IMR-90 (cell line): ENCODE measurements at regions of chr2 and their contacts with region 1.

Region 1: GRCh38 chr2:10312437-10312957 is 9.8 kb downstream of the HPCAL1 start:
- DNase-seq: no peak
- ATAC-seq: no peak
- H3K4me3 ChIP-seq: no peak overlapping the region
- H3K27ac ChIP-seq: no peak overlapping the region
- H3K4me1 ChIP-seq: no peaks in the 10 kb centered on the region; the same call in 1 of the 2 replicates
- H3K27me3 ChIP-seq: no peaks in the 10 kb centered on the region
- CTCF ChIP-seq: no peak
- POLR2A ChIP-seq: no peak
- RAD21 ChIP-seq: no peak

Region 2: DNA sequence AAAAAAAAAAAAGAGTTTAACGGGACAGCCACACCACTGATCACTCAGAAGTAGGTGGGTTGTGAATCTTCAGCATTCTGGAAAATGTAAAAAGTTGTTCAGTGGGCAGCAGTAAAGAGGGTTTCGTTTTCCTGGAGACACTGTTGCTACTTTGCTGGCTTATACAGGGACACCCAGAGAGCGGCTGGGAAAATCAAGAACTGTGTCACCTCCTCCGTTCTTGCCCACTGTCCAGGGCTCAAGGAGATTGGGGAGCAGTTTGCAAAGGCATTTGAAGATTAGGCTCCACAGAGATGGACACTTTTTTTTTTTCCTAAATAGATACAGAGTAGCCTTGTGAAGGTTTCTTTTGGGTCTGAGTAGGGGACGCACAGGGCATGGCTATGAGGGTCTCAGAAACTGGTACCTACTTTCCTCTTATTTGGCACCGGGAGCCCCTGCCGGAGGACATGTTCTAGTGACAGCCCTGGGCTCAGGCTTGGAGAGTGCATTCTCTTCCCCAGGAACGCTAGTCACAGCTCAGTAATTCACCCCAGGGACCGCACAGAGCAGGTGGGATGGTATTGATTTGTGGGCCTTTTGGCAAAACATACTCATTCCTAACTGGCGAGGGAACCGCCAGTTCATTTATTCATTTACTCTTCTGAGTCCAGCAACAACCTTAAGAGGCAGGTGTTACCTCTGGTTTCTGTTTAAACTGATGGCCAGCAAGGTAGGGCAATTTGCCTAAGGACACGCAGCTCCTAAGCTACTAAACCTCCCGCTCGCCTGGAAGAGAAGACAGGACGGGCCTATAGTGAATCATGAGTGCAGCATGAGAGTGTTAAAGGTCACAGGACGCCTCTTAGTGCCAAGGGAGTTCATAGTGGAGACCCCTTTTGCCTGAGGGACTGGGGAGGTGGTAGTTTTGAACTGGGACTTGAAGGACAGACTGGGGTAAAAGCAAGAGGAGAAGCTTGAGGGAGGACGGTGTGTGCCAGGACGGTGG is 43.3 kb after region 1 on chr2:
- CTCF ChIA-PET with region 1: no interaction called
- POLR2A ChIA-PET with region 1: no interaction called
- dilution Hi-C with region 1: no loop called
- in situ Hi-C with region 1: no loop called
- intact Hi-C with region 1: loop called (anchors 1 kb)
- DNase-seq: no peak
- ATAC-seq: no peak
- H3K4me3 ChIP-seq: no peak overlapping the region
- H3K27ac ChIP-seq: no peak overlapping the region
- H3K4me1 ChIP-seq: peaks cover 1% of the 10 kb centered on the region; the same call in 1 of the 2 replicates
- H3K27me3 ChIP-seq: no peaks in the 10 kb centered on the region
- CTCF ChIP-seq: no peak
- POLR2A ChIP-seq: no peak
- RAD21 ChIP-seq: no peak